Activated T-helper 2 cell treated with anti-CD3 and anti-CD28 coated beads, Interferon-gamma antibody, Interleukin-2, Interleukin-4, amounts not matched to agents 10 μg/mL and 5 μg/mL and 100 μg/mL, durations not matched to agents 14 hours and 24 hours and 36 hours (primary cell): ENCODE measurements at regions of chr3 and their contacts with region 1.

Region 1: DNA sequence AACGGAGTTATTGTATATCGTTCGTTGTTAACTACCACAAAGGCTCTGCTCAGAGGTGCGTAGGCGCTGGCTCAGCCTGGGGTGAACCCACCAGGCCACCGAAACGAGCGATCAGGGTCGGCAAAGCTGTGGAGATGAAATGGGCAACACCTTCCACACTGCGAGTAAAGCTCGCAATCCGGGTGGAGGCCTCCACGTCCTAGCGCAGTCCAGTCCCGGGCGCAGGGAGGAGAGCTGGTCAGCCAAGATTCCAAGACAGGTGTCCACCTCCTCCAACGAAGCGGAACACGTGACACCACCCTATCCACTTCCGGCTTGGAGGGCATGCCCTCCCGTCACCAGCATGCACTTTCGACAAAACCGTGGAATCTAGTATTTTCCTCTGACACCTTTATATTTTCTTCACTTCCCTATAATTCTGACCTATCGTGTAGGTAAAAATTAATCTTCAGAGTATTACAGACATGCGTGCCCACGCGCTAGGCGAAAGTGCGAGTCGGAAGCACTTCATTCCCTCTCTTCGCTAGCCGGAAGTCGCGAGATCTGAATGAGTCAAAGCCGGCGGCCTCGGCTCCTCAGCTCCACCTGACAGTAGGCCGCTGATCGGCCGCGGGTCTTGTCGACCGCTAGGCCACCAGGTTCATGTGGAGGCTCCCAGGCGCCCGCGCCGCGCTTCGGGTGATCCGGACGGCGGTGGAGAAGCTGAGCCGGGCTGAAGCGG is at the start of gene PDE12:
- DNase-seq: peak; percentile 80
- H3K4me3 Mint-ChIP-seq: peak within 1 kb of the TSS; percentile 88
- H3K27ac Mint-ChIP-seq: peak within 1 kb of the TSS; percentile 98
- H3K4me1 Mint-ChIP-seq: peaks cover 39% of the 10 kb centered on the region
- H3K27me3 Mint-ChIP-seq: no peaks in the 10 kb centered on the region
- total RNA-seq, gene PDE12: 26.4 and 28.1 TPM in 2 replicates

Region 2: DNA sequence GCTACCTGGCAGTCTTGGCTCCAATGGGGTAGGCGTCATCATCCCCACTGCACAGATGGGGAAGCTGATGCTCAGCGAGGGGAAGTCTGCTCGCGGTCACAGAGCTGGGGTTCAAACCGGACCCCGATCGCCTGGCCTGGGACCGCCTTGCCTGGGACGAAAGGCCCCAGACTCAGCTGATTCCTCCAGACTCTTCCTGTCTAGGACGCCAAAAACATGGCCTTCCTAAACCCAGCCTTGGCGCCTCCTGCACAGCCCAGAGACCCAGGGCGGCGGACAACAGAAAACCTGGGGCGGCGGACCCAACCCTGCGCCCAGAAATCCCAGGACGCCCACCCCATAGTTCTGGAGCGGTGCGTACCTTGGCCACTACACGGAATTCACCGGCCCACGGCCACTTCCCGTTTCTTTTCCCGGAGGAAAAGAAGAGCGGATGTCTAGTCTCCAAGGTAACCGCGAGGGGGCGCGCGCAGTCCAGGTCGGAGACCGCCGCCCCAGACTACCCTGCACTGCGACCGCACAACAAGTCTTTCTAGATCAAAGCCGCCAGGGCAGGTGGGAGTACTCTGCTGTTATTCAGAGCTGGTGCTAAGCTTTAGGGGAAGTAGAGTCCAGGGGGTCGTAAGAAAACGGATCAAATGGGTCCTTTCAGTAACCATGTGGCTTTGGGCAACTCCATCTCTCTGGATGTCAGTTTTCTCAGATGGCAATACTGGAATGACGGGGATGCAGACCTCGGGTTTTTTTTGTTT is 385.9 kb before region 1 on chr3:
- intact Hi-C with region 1: loop called (anchors 5 kb)
- DNase-seq: peak; percentile 40
- H3K4me3 Mint-ChIP-seq: peak overlapping the region; percentile 60
- H3K27ac Mint-ChIP-seq: no peak overlapping the region
- H3K4me1 Mint-ChIP-seq: peaks cover 2% of the 10 kb centered on the region
- H3K27me3 Mint-ChIP-seq: peaks cover 56% of the 10 kb centered on the region

Region 3: GRCh38 chr3:57484563-57484962 is 71.3 kb before region 1 on chr3:
- intact Hi-C with region 1: no loop called
- DNase-seq: no peak
- H3K4me3 Mint-ChIP-seq: no peak overlapping the region
- H3K27ac Mint-ChIP-seq: no peak overlapping the region
- H3K4me1 Mint-ChIP-seq: no peaks in the 10 kb centered on the region
- H3K27me3 Mint-ChIP-seq: peaks cover 2% of the 10 kb centered on the region

Region 4: GRCh38 chr3:57597122-57597923 is 41.4 kb after region 1 on chr3 and contains the start of gene ARF4:
- intact Hi-C with region 1: loop called (anchors 1 kb)
- DNase-seq: peak; percentile 100
- H3K4me3 Mint-ChIP-seq: peak within 1 kb of the TSS; percentile 97
- H3K27ac Mint-ChIP-seq: peak within 1 kb of the TSS; percentile 100
- H3K4me1 Mint-ChIP-seq: peaks cover 32% of the 10 kb centered on the region
- H3K27me3 Mint-ChIP-seq: no peaks in the 10 kb centered on the region
- total RNA-seq, gene ARF4: 93.6 and 95.6 TPM in 2 replicates

Region 5: GRCh38 chr3:58177747-58178527 is 622.0 kb after region 1 on chr3:
- intact Hi-C with region 1: no loop called
- DNase-seq: peak; percentile 80
- H3K4me3 Mint-ChIP-seq: peak overlapping the region; percentile 74
- H3K27ac Mint-ChIP-seq: no peak overlapping the region
- H3K4me1 Mint-ChIP-seq: peaks cover 18% of the 10 kb centered on the region
- H3K27me3 Mint-ChIP-seq: peaks cover 2% of the 10 kb centered on the region